MCF 10A (cell line): ENCODE measurements at regions of chr6 and their contacts with region 1.

Region 1: GRCh38 chr6:44237813-44238433 is 9.0 kb upstream of the HSP90AB1 start:
- DNase-seq: peak; percentile 69
- H3K4me3 Mint-ChIP-seq: peak overlapping the region; percentile 86
- H3K27ac Mint-ChIP-seq: peak overlapping the region; percentile 85
- H3K4me1 Mint-ChIP-seq: peaks cover 22% of the 10 kb centered on the region
- H3K27me3 Mint-ChIP-seq: no peaks in the 10 kb centered on the region
- CTCF ChIP-seq: peak; percentile 94

Region 2: DNA sequence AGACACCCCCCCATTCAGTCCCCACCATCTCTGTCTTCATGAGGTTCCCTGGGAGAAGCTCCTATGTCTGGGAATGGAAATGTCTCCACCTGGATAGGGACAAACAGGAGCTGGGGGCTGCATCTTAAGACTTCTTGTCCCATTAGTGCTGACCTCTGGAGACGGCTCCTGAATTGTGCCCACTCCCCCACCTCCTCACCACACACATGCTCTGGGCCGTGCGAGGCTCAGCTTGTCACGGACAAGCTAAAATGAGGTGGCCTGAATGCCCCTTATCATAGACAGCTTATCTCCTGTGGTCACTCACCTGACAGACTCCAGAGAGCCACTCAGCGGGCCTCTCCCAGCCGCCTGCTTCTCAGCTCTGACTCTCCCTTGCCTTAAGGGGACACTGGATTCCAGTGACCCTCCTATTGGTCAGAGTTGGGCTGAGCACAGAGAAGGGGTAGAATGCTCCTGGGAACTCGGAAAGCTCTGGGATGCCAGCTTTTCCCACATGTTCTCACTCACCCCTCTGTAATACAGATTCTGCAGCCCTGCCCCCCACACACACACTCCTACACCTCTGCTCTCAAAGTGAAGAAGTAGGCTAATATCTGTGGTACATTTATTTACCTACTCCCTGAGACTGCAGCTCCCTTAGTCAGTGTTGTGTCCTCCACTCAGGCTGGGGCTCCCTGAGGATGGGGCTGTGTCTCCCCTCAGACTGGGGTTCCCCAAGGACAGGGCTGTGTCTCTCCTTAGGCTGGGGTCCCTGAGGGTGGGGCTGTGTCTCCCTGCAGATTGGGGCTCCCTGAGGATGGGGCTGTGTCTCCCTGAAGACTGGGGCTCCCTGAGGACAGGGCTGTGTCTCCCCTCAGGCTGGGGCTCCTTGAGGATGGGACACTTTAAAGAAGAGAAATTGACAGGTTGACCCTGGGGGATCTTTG is 300.4 kb before region 1 on chr6:
- CTCF ChIA-PET with region 1: no interaction called
- POLR2A ChIA-PET with region 1: no interaction called
- intact Hi-C with region 1: no loop called
- DNase-seq: no peak
- H3K4me3 Mint-ChIP-seq: no peak overlapping the region
- H3K27ac Mint-ChIP-seq: no peak overlapping the region
- H3K4me1 Mint-ChIP-seq: no peaks in the 10 kb centered on the region
- H3K27me3 Mint-ChIP-seq: no peaks in the 10 kb centered on the region
- CTCF ChIP-seq: no peak

Region 3: GRCh38 chr6:44221291-44221960 is 16.5 kb before region 1 on chr6:
- CTCF ChIA-PET with region 1: interaction called, 52 read pairs
- POLR2A ChIA-PET with region 1: interaction called, 14 read pairs
- intact Hi-C with region 1: loop called (anchors 1 kb)
- DNase-seq: peak; percentile 96
- H3K4me3 Mint-ChIP-seq: peak overlapping the region; percentile 47
- H3K27ac Mint-ChIP-seq: peak overlapping the region; percentile 89
- H3K4me1 Mint-ChIP-seq: peaks cover 37% of the 10 kb centered on the region
- H3K27me3 Mint-ChIP-seq: no peaks in the 10 kb centered on the region
- CTCF ChIP-seq: peak; percentile 76

Region 4: DNA sequence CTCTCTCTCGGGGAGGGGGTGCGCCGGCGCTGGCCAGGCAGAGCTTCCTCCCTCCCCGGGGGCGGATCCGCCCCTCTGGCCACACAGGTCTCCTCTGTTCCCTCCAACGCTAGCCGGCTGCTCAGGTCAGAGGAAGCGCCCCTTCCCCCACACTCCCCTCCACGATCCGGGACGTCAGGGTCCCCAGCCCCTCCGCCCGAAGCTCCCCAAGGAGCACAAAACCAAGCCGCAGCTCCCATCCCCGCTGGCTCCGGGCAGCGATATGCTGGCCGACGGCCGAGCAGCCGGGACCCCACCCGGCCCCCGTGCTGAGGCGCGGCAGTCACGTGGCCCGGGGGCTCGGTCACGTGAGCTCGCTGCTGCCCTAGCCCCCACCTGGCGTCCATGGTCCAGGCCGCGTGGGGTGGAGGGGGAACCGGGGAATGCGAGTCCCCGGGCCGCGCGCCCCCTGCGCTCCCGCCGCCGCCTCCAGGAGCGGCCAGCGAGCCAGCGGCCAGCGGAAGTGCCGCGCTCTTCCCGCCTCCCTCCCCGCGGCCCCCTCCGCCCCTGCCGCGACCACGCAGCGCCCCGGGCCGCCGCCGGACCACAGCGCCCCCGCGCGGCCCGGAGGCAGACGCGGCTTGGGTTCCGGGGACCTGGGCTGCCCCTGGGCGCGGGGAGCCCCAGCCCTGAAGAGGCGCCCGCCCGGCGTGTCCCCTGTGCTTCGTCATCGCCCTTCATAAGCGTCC is 19.3 kb after region 1 on chr6 and contains the start of gene SLC35B2:
- CTCF ChIA-PET with region 1: interaction called, 33 read pairs
- POLR2A ChIA-PET with region 1: interaction called, 16 read pairs
- intact Hi-C with region 1: no loop called
- DNase-seq: peak; percentile 47
- H3K4me3 Mint-ChIP-seq: peak within 1 kb of the TSS; percentile 84
- H3K27ac Mint-ChIP-seq: peak within 1 kb of the TSS; percentile 57
- H3K4me1 Mint-ChIP-seq: peaks cover 50% of the 10 kb centered on the region
- H3K27me3 Mint-ChIP-seq: no peaks in the 10 kb centered on the region
- CTCF ChIP-seq: peak; percentile 78
- total RNA-seq, gene SLC35B2: 27.1 and 31.3 TPM in 2 replicates

Region 5: DNA sequence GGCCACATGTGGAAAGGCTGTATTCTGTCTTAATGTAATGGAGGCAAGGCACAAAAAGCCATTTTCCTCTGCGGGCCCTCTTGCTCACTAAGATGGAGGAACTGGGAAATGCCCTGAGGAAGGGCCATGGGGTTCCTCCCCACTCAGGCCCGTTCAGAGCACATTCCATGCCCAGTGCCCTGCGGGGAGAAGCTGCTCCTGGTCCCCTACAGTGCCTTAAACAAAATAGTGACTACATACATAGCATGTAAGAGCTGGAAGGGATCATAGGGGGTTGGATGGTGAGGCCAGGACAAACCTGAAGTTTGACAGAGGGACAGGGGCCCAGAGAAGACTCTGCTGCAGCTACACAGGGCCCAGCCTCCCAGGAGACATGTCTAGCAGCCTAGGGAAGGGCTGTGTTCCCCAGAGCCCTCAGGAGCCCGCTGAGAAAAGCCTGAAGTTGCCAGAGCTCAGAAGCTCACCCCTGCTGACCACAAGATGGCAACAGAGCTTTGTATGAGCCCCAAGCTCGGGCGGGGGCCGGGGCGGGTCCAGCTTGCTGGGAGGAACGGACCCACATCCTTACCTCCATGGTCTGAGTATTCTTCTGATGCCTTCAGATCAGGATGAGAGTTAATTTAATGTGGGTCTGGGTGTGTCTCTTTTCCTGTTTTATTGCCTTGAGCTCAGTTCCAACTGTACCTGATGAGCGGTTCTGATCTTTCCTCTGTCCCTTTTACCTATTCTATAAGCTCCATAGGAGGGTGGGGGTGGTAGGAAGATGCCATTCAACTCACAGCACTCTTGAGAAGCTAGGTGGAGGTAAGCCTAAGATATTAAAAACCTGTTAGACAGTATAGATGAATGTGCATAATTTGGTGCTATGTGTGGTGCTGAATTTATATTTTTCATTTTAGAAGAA is 392.5 kb after region 1 on chr6:
- CTCF ChIA-PET with region 1: no interaction called
- POLR2A ChIA-PET with region 1: no interaction called
- intact Hi-C with region 1: no loop called
- DNase-seq: peak; percentile 55
- H3K4me3 Mint-ChIP-seq: no peak overlapping the region
- H3K27ac Mint-ChIP-seq: no peak overlapping the region
- H3K4me1 Mint-ChIP-seq: no peaks in the 10 kb centered on the region
- H3K27me3 Mint-ChIP-seq: peaks cover 14% of the 10 kb centered on the region
- CTCF ChIP-seq: peak; percentile 67